Endothelial cell of umbilical vein (primary cell): ENCODE measurements at regions of chr5 and their contacts with region 1.

Region 1: DNA sequence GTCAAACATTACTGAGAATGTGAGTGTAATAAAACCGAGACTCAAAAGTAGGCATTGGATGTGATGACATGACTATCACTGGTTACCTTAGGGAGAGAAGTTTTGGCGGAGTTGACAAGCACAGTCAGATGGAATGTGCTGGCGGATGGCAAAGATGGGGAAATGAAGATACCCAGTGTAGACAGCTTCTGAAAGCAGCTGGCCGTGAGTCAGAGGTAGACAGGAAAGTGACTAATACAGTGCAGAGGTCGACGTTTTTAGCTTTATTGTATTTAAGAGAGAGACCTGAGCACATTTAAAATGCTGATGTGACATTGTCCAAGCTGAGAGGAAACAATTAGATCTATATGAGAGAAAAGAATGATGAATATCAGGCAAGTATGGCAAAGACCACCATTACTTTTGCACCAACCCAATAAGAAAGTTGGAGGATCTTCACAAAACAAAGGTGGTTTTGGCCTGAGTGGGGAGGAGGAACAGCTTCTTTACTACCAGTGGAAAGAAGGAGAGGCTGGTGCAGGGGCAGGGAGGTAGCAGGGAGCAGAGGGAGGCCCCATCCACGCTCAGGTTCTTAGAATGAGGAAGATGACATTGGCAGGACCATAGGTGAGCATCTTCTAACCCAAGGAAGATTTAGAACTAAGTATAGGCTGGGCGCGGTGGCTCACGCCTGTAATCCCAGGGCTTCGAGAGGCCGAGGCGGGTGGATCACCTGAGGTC is 36.7 kb upstream of the KCNIP1 start:
- DNase-seq: peak; percentile 91
- H3K4me3 ChIP-seq: no peak overlapping the region
- H3K27ac ChIP-seq: peak overlapping the region; percentile 77
- H3K4me1 ChIP-seq: peaks cover 33% of the 10 kb centered on the region
- H3K27me3 ChIP-seq: no peaks in the 10 kb centered on the region
- CTCF ChIP-seq: no peak
- POLR2A ChIP-seq: no peak

Region 2: GRCh38 chr5:170479484-170479883 is 12.3 kb after region 1 on chr5:
- CTCF ChIA-PET with region 1: interaction called, 10 read pairs
- POLR2A ChIA-PET with region 1: no interaction called
- dilution Hi-C with region 1: no loop called
- intact Hi-C with region 1: loop called (anchors 1 kb)
- DNase-seq: peak; percentile 71
- H3K4me3 ChIP-seq: no peak overlapping the region
- H3K27ac ChIP-seq: peak overlapping the region; percentile 52
- H3K4me1 ChIP-seq: peaks cover 6% of the 10 kb centered on the region
- H3K27me3 ChIP-seq: no peaks in the 10 kb centered on the region
- CTCF ChIP-seq: peak in 1 of 2 donors; percentile 12
- POLR2A ChIP-seq: no peak

Region 3: DNA sequence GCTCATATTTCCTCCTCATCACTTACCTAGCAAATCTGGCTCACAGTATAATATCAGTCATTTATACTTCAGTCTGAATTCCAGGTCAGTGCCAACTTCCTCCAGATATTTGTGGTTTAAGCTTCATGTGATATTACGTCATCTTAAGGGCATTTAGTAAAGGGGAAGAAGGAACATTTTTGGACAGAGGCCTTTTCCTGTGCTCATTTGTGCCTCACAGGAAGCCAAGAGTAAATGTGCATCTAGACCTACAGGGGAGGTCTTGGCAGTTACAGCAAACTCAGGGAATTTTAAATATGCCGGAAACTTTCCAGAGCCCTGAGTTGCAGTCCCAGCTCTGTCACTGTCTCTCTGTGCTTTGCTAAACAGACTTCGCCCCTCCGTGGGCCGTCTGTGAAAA is 24.3 kb after region 1 on chr5:
- CTCF ChIA-PET with region 1: interaction called, 6 read pairs
- POLR2A ChIA-PET with region 1: interaction called, 6 read pairs
- dilution Hi-C with region 1: no loop called
- intact Hi-C with region 1: loop called (anchors 1 kb)
- DNase-seq: peak; percentile 91
- H3K4me3 ChIP-seq: no peak overlapping the region
- H3K27ac ChIP-seq: peak overlapping the region; percentile 75
- H3K4me1 ChIP-seq: peaks cover 15% of the 10 kb centered on the region
- H3K27me3 ChIP-seq: no peaks in the 10 kb centered on the region
- CTCF ChIP-seq: no peak
- POLR2A ChIP-seq: peak; percentile 25